AG04449 (cell line): ENCODE measurements at regions of chr11 and their contacts with region 1.

Region 1: GRCh38 chr11:13183094-13183825 is 94.3 kb upstream of the BMAL1 start:
- DNase-seq: peak; percentile 36
- H3K4me3 ChIP-seq: peak overlapping the region; percentile 28
- CTCF ChIP-seq: peak; percentile 24

Region 2: DNA sequence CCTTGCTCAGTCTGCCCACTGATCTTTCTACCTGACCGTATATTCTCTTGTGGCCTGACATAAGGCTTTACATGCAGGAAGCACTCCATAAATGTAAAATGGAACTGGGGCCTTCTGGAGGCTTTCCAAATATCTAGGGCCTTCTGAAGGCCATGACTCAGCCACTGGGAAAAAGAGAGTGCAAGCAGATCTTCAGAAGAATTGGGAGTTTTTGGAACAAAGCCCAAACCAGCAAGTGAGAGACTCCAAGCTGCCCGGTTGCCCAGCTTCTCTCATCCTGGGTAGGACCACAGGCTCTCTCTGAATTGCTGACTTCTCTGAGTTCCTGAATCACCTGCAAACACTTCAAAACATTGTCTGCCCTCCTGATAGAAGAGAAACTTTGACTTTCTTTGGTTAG is 13.6 kb before region 1 on chr11:
- CTCF ChIA-PET with region 1: interaction called, 21 read pairs
- POLR2A ChIA-PET with region 1: no interaction called
- DNase-seq: peak; percentile 85
- H3K4me3 ChIP-seq: no peak overlapping the region
- CTCF ChIP-seq: no peak